Posterior vena cava (tissue), 2 donors: ENCODE measurements at regions of chr12 and their contacts with region 1.

Region 1: DNA sequence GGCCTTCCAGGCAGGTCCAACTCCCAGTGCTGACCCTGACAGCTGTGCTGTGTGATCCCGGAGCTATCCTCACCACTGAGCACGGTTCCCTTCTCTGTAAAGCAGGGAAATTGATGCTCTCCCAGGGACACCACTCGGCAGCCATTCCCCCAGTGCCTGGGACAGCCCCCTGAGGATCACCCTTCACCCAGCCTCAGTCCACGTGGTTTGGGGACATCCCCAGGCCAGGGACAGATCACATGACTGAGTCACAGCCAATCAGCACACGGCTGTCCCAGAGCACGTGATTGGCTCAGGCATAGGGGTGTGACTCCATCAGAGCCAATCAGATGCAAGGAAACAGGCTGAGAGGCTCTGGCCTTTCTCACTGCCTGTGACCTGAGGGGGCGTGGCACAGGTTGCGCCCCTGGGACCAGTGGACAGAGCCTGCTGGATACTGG is 68.8 kb upstream of the SFSWAP start:
- DNase-seq: no peak

Region 2: DNA sequence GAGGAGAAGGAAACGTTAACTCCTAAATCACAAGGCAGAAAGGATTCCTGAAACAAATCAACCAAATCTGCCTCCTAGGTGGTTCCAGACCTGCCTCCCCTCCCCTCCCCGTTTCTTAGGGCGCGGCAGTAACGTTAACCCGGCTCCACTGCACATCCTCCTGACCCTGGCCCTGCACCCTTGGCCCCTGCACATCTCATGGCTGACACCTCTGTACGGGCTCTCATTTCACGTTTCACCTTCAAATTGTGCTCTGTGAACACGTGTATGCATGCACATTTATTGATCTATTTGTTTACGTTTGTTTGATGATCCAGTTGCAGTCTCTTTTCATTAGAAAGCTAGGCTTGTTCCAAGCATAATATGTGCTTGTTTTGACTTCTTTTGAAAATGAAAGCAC is 330.4 kb before region 1 on chr12:
- intact Hi-C with region 1: loop called in 1 of 2 experiments (anchors 5 kb)
- DNase-seq: no peak

Region 3: GRCh38 chr12:131621701-131622421 is 20.3 kb before region 1 on chr12:
- intact Hi-C with region 1: loop called in 1 of 2 experiments (anchors 1 kb)
- DNase-seq: peak; percentile 73